ENCODE measurements at regions of chr5 and their contacts with region 1.

Region 1: DNA sequence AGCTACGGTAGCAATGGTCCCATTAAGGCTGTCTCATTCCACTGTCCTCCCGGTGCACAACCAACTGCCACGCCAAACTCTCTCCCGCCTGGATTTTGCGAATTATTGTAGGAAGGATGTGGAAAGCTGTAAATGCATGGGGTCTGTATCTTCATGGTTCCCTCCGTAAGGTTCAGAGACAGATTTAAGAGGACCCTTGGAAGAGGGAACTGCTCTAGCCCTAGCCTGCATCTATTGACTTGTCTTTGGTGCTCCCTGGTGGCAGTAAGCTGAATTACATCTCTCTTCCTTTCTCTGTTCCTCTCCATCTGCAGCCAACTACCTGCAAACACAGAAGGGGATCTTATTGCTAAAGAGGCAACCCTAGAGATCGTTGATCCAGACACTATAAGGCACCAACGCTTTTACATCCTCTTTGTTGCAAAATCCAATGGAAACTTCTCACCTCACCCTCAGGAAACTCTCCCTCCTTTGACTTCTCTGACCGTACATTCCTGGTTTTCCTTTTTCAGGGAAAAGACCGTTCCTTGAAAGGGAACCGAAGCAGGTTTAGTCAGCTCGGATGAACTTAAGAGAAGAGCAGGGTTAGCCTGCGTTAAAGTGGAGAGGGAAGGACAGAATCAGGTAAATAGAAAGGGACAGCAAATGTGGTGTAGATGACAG is 11.9 kb downstream of the CAPSL start:
- DNase-seq: peak; percentile 60
- H3K27ac ChIP-seq: no peak overlapping the region
- CTCF ChIP-seq: peak; percentile 89

Region 2: DNA sequence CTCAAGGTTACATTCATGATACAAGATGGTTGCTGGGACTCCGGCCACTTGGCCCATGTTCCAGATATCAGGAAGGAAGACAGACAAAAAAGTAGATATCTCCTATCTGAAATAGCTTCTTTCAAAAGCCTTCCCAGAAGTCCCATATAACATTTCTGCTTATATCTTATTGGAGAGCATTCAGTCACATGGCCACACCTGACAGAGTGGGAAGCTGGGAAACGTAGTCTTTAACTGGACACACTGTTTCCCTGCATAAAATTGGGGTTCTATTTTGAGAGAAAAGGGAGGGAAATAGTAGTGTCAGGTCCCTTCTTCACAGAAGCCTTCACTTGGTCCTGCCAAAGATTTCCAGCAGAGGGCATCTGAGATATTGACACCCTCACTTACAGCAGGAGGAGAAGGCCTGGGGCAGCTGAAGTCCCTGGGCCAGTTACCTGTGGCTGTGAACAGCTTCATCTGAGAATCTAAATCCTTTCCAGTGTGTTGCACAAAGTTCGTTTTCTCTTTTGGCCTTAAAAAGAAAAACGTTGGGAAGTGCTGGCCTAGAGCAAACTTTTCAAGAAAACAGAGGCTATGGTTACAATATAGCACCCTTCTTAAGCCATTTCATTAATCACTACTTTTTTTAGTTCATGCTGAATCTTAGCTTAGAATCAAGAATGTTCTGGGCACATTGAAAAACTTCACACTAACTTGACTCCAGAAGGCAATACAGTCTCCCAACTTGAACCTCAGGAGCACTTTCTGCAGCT is 275.3 kb before region 1 on chr5:
- CTCF ChIA-PET with region 1: interaction called, 43 read pairs
- POLR2A ChIA-PET with region 1: no interaction called
- DNase-seq: peak; percentile 38
- H3K27ac ChIP-seq: no peak overlapping the region
- CTCF ChIP-seq: peak; percentile 39

Region 3: DNA sequence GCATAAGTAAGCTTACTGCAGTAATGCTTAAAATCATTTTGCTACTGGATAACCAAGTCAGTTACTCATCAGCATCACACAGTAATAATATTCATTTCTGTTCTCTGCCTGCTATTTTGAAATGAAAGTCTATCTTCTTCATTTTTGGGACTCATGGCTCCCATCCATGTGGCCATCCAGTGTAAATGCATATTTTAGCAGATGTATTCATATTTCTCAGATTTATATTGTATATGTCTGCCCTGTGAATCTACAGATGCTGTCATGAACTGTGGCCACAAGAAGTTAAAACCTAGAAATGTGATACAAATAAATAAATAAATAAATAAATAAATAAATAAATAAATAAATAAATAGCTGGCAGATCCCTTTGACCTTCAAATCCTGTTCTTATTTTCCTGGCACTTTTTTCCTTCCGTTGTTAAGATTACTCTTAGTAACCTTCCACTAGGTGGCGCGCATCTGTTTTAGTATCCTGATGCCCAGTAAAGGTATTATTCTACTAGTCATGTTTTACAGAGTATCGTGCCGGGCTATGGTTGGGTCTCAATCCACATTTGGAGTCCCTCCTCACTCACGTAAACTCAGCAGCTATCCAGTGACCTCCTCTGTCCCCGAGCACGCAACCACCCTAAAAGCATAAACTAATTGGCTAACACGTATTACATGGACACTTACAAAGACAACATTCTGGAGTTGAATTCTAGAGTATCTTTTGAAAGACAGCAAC is 149.0 kb before region 1 on chr5:
- CTCF ChIA-PET with region 1: interaction called, 17 read pairs
- POLR2A ChIA-PET with region 1: no interaction called
- DNase-seq: peak; percentile 43
- H3K27ac ChIP-seq: no peak overlapping the region
- CTCF ChIP-seq: peak; percentile 59

Region 4: GRCh38 chr5:35963381-35963843 is 36.9 kb after region 1 on chr5:
- CTCF ChIA-PET with region 1: no interaction called
- POLR2A ChIA-PET with region 1: no interaction called
- DNase-seq: no peak
- H3K27ac ChIP-seq: no peak overlapping the region
- CTCF ChIP-seq: peak; percentile 16; the same call in 1 of the 2 replicates